ENCODE measurements at regions of chr1 and their contacts with region 1.

Region 1: GRCh38 chr1:10308001-10308400 is 90.9 kb upstream of the PGD start:
- DNase-seq: peak in 31 of 35 experiments; percentile 5 to 64 (median 26)
- ATAC-seq: peak; percentile 52 to 97 (median 74)
- H3K4me3 ChIP-seq: no peak overlapping the region
- H3K4me3 Mint-ChIP-seq: no peak overlapping the region
- H3K27ac ChIP-seq: peak overlapping the region; percentile 57
- H3K27ac Mint-ChIP-seq: peak overlapping the region; percentile 63 to 76
- H3K4me1 ChIP-seq: peaks cover 0 to 2% of the 10 kb centered on the region in 2 experiments
- H3K4me1 Mint-ChIP-seq: peaks cover 7 to 21% (median 9%) of the 10 kb centered on the region in 3 donors
- H3K27me3 ChIP-seq: no peaks in the 10 kb centered on the region
- H3K27me3 Mint-ChIP-seq: no peaks in the 10 kb centered on the region

Region 2: DNA sequence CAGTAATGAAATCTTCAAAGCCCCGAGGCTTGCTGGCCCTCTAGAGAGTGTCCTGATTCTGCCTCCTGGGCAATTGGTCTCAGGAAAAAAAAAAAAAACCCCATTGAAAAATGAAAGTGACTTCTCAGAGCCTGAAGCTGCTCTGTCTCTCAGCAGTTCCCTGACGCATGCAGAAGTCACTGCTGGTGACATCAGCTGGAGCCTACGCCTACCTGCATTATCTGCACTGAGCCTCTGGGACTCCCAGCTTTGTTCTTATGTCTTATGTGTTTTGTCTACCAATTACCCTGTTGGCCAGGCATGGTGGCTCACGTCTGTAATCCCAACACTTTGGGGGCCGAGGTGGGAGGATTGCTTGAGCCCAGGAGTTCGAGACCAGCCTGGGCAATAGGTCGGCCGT is 778.8 kb before region 1 on chr1:
- CTCF ChIA-PET with region 1: no interaction called
- POLR2A ChIA-PET with region 1: interaction called in 1 of 2 experiments, 10 read pairs
- DNase-seq: no peak
- ATAC-seq: no peak
- H3K4me3 ChIP-seq: no peak overlapping the region
- H3K4me3 Mint-ChIP-seq: no peak overlapping the region
- H3K27ac ChIP-seq: no peak overlapping the region
- H3K27ac Mint-ChIP-seq: no peak overlapping the region
- H3K4me1 ChIP-seq: no peaks in the 10 kb centered on the region
- H3K4me1 Mint-ChIP-seq: no peaks in the 10 kb centered on the region
- H3K27me3 ChIP-seq: no peaks in the 10 kb centered on the region
- H3K27me3 Mint-ChIP-seq: no peaks in the 10 kb centered on the region

Region 3: DNA sequence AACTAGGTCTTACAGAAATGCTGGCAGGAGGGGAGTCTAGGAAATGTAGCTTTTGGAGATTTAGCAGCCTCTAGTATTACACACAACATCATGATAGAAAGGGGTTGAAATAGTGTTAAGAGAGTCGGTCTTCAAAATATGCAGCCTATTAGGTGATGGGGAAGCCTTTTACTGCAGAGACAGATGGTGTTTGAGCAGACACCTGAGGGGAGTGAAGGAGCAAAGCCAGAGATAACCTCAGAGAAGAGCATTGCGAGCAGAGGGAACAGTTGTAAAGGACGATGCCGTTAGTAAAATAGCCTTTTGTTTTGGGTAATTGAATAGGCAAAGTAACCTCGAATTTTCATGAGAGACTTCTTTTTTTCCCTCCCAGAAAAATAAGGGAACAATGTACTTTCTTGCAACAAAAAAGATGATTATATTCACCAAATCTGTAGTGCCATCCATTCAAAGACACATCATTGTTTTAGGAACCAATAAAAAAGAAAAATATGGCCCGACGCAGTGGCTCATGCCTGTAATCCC is 164.0 kb before region 1 on chr1:
- CTCF ChIA-PET with region 1: no interaction called
- POLR2A ChIA-PET with region 1: no interaction called
- DNase-seq: no peak
- ATAC-seq: no peak
- H3K4me3 ChIP-seq: no peak overlapping the region
- H3K4me3 Mint-ChIP-seq: no peak overlapping the region
- H3K27ac ChIP-seq: no peak overlapping the region
- H3K27ac Mint-ChIP-seq: no peak overlapping the region
- H3K4me1 ChIP-seq: no peaks in the 10 kb centered on the region
- H3K4me1 Mint-ChIP-seq: no peaks in the 10 kb centered on the region
- H3K27me3 ChIP-seq: no peaks in the 10 kb centered on the region
- H3K27me3 Mint-ChIP-seq: no peaks in the 10 kb centered on the region

Region 4: GRCh38 chr1:10236405-10237156 is 71.4 kb before region 1 on chr1:
- CTCF ChIA-PET with region 1: no interaction called
- POLR2A ChIA-PET with region 1: no interaction called
- DNase-seq: no peak
- ATAC-seq: no peak
- H3K4me3 ChIP-seq: no peak overlapping the region
- H3K4me3 Mint-ChIP-seq: no peak overlapping the region
- H3K27ac ChIP-seq: no peak overlapping the region
- H3K27ac Mint-ChIP-seq: no peak overlapping the region
- H3K4me1 ChIP-seq: no peaks in the 10 kb centered on the region
- H3K4me1 Mint-ChIP-seq: peaks cover 0 to 5% (median 0%) of the 10 kb centered on the region in 3 donors
- H3K27me3 ChIP-seq: no peaks in the 10 kb centered on the region
- H3K27me3 Mint-ChIP-seq: no peaks in the 10 kb centered on the region